ENCODE measurements at regions of chr7 and their contacts with region 1.

Region 1: GRCh38 chr7:12322284-12322902 is 81.3 kb downstream of the VWDE start:
- DNase-seq: peak; percentile 51
- H3K4me3 ChIP-seq: no peak overlapping the region
- H3K27ac ChIP-seq: no peak overlapping the region
- H3K4me1 ChIP-seq: no peaks in the 10 kb centered on the region
- H3K27me3 ChIP-seq: no peaks in the 10 kb centered on the region
- CTCF ChIP-seq: peak; percentile 32 to 38
- POLR2A ChIP-seq: no peak

Region 2: DNA sequence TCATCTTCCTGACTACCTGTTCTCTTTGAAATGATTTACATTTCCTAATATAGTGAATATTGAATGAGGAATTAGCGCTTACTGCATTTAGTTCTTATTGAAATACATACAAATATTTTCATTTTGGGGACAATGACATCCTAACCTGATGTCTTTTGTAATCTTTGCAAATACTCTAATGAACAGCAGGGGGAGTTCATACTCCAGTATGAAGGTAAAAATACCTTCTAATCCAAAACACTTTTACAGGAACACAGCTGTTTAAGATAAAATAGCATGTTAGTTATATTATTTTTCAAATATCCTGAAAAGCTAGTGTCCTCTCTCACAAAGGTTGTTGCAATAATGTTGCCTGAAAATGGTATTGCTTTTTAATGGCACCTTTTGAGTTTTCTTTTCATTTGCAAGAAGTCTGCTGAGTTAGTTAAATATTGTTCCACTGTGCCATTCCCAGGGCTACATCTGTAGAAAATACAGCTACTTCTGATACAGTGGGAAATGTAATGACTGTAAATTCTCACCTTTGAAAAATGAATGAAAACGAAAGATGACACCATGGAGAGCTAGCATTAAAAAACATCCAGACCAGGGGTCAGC is 948.7 kb before region 1 on chr7:
- CTCF ChIA-PET with region 1: interaction called, 20 read pairs
- POLR2A ChIA-PET with region 1: no interaction called
- dilution Hi-C with region 1: no loop called
- intact Hi-C with region 1: loop called (anchors 1 kb)
- DNase-seq: peak; percentile 38
- H3K4me3 ChIP-seq: no peak overlapping the region
- H3K27ac ChIP-seq: no peak overlapping the region
- H3K4me1 ChIP-seq: no peaks in the 10 kb centered on the region
- H3K27me3 ChIP-seq: no peaks in the 10 kb centered on the region
- CTCF ChIP-seq: peak; percentile 16 to 29
- POLR2A ChIP-seq: no peak

Region 3: GRCh38 chr7:11427686-11428273 is 894.6 kb before region 1 on chr7:
- CTCF ChIA-PET with region 1: interaction called, 8 read pairs
- POLR2A ChIA-PET with region 1: no interaction called
- dilution Hi-C with region 1: no loop called
- intact Hi-C with region 1: loop called (anchors 1 kb)
- DNase-seq: peak; percentile 86
- H3K4me3 ChIP-seq: no peak overlapping the region
- H3K27ac ChIP-seq: peak overlapping the region; percentile 1
- H3K4me1 ChIP-seq: peaks cover 5% of the 10 kb centered on the region
- H3K27me3 ChIP-seq: no peaks in the 10 kb centered on the region
- CTCF ChIP-seq: peak; percentile 43 to 48
- POLR2A ChIP-seq: no peak

Region 4: DNA sequence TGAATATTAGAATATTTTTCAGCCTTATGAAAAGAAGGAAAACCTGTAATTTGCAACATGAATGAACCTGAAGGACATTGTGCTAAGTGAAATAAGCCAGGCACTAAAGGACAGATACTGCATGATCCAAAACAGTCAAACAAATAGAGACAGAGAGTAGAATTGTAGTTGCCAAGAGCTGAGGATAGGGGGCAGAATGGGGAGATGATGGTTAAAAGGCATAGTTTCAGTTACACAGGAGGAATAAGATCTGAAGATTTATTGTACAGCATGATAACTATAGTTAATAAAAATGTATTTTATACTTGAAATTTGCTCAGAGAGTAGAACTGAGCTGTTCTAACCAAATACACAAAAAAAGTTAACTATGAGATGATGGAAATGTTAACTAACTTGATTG is 260.3 kb before region 1 on chr7:
- CTCF ChIA-PET with region 1: interaction called, 19 read pairs
- POLR2A ChIA-PET with region 1: no interaction called
- dilution Hi-C with region 1: no loop called
- intact Hi-C with region 1: loop called (anchors 1 kb)
- DNase-seq: no peak
- H3K4me3 ChIP-seq: no peak overlapping the region
- H3K27ac ChIP-seq: no peak overlapping the region
- H3K4me1 ChIP-seq: no peaks in the 10 kb centered on the region
- H3K27me3 ChIP-seq: no peaks in the 10 kb centered on the region
- CTCF ChIP-seq: peak; percentile 11 to 29
- POLR2A ChIP-seq: no peak

Region 5: DNA sequence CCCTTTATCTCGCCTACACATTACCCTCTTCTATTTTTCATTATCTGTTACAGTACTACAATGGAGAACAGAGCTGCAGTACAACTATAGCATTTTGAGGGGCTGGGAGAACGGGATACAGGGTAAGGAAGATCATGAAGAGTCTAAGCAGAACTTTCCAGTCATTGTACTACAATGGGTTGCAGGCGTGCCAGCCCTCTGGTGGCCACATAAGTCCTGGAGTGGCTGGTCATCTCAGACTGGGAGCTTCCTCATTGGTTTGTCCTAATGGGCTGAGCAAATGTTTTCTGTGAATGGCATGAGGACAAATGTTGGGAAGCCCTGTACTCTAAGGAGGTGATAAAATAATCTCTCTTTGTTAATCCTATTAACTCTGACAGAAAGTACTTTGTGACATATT is 78.3 kb before region 1 on chr7:
- CTCF ChIA-PET with region 1: interaction called, 11 read pairs
- POLR2A ChIA-PET with region 1: no interaction called
- dilution Hi-C with region 1: no loop called
- intact Hi-C with region 1: no loop called
- DNase-seq: peak; percentile 36
- H3K4me3 ChIP-seq: no peak overlapping the region
- H3K27ac ChIP-seq: no peak overlapping the region
- H3K4me1 ChIP-seq: no peaks in the 10 kb centered on the region
- H3K27me3 ChIP-seq: no peaks in the 10 kb centered on the region
- CTCF ChIP-seq: peak; percentile 48 to 64
- POLR2A ChIP-seq: no peak

Measured in endothelial cell of umbilical vein (primary cell).